Caco-2 (cell line): ENCODE measurements at regions of chr11 and their contacts with region 1.

Region 1: GRCh38 chr11:66222358-66223149 is 45.9 kb upstream of the RAB1B start:
- DNase-seq: peak; percentile 90 to 92
- H3K4me3 ChIP-seq: no peak overlapping the region
- H3K4me3 Mint-ChIP-seq: no peak overlapping the region
- H3K27ac Mint-ChIP-seq: peak overlapping the region; percentile 47
- H3K4me1 ChIP-seq: peaks cover 9% of the 10 kb centered on the region; the same call in 1 of the 2 replicates
- H3K4me1 Mint-ChIP-seq: peaks cover 18% of the 10 kb centered on the region
- H3K27me3 ChIP-seq: no peaks in the 10 kb centered on the region
- H3K27me3 Mint-ChIP-seq: no peaks in the 10 kb centered on the region
- CTCF ChIP-seq: peak; percentile 99 to 100

Region 2: DNA sequence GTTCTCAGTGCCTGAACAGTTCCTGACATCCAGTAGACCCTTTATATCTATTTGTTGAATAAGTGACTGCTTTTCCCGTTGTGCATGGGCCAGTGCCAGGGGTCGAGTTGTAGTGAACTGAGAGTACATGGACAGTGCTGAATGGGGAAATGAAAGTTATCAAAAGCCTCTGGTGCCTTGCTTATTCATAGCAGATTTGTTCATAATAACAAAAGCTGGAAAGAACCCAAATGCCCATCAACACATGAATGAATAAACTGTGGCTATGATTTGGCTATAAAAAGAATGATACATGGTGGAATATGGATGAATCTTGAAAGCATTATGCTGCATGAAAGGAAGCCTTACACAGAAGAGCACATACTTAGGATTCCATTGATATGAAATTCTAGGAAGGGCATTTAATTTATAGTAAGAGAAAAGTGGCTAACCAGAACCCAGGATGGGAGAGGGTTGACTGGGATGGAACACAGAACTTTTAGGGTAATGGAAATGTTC is 109.9 kb before region 1 on chr11:
- CTCF ChIA-PET with region 1: interaction called, 14 read pairs
- POLR2A ChIA-PET with region 1: no interaction called
- intact Hi-C with region 1: no loop called
- DNase-seq: no peak
- H3K4me3 ChIP-seq: no peak overlapping the region
- H3K4me3 Mint-ChIP-seq: peak overlapping the region; percentile 39
- H3K27ac Mint-ChIP-seq: peak overlapping the region; percentile 89
- H3K4me1 ChIP-seq: peaks cover 71% of the 10 kb centered on the region
- H3K4me1 Mint-ChIP-seq: peaks cover 51% of the 10 kb centered on the region
- H3K27me3 ChIP-seq: no peaks in the 10 kb centered on the region
- H3K27me3 Mint-ChIP-seq: no peaks in the 10 kb centered on the region
- CTCF ChIP-seq: no peak

Region 3: DNA sequence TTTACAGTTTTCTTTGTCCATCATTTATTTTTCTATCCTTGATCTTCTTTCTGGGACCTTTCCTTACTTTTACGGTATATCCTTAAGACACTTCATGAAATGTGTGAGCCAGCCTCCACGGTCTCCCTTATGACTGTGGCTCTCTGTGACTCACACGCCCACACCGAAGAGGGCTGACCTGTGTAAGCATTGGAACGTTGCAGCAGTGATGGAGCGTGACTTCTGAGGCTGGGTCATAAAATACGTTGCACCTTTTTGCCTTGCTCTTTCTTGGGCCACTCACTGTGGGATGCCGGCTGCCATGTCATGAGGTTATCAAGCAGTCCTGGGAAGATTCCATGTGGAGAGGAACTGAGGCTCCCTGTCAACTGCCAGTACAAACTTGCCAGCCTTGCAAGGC is 50.4 kb before region 1 on chr11:
- CTCF ChIA-PET with region 1: no interaction called
- POLR2A ChIA-PET with region 1: no interaction called
- intact Hi-C with region 1: no loop called
- DNase-seq: no peak
- H3K4me3 ChIP-seq: no peak overlapping the region
- H3K4me3 Mint-ChIP-seq: no peak overlapping the region
- H3K27ac Mint-ChIP-seq: no peak overlapping the region
- H3K4me1 ChIP-seq: peaks cover 8% of the 10 kb centered on the region; the same call in 1 of the 2 replicates
- H3K4me1 Mint-ChIP-seq: peaks cover 26% of the 10 kb centered on the region
- H3K27me3 ChIP-seq: no peaks in the 10 kb centered on the region
- H3K27me3 Mint-ChIP-seq: no peaks in the 10 kb centered on the region
- CTCF ChIP-seq: no peak

Region 4: GRCh38 chr11:66183494-66184048 is 39.0 kb before region 1 on chr11:
- CTCF ChIA-PET with region 1: interaction called, 5 read pairs
- POLR2A ChIA-PET with region 1: interaction called, 14 read pairs
- intact Hi-C with region 1: no loop called
- DNase-seq: peak in 1 of 2 experiments; percentile 24
- H3K4me3 ChIP-seq: no peak overlapping the region
- H3K4me3 Mint-ChIP-seq: no peak overlapping the region
- H3K27ac Mint-ChIP-seq: no peak overlapping the region
- H3K4me1 ChIP-seq: peaks cover 8% of the 10 kb centered on the region; the same call in 1 of the 2 replicates
- H3K4me1 Mint-ChIP-seq: peaks cover 7% of the 10 kb centered on the region
- H3K27me3 ChIP-seq: no peaks in the 10 kb centered on the region
- H3K27me3 Mint-ChIP-seq: no peaks in the 10 kb centered on the region
- CTCF ChIP-seq: no peak

Region 5: DNA sequence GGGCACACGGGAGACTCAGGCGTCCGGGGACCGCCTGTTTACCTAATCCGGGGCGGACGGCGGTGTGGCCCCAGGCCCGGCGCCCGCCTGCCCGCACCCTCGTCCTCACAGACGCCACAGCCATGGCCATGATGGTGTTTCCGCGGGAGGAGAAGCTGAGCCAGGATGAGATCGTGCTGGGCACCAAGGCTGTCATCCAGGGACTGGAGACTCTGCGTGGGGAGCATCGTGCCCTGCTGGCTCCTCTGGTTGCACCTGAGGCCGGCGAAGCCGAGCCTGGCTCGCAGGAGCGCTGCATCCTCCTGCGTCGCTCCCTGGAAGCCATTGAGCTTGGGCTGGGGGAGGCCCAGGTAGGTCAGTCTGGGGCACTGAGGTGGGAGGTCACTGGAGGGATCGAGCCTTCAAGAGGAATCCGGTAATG is 35.9 kb after region 1 on chr11:
- CTCF ChIA-PET with region 1: interaction called, 3 read pairs
- POLR2A ChIA-PET with region 1: no interaction called
- intact Hi-C with region 1: loop called (anchors 1 kb)
- DNase-seq: no peak
- H3K4me3 ChIP-seq: peak overlapping the region; percentile 81
- H3K4me3 Mint-ChIP-seq: peak overlapping the region; percentile 93
- H3K27ac Mint-ChIP-seq: peak overlapping the region; percentile 90
- H3K4me1 ChIP-seq: no peaks in the 10 kb centered on the region
- H3K4me1 Mint-ChIP-seq: peaks cover 18% of the 10 kb centered on the region
- H3K27me3 ChIP-seq: no peaks in the 10 kb centered on the region
- H3K27me3 Mint-ChIP-seq: no peaks in the 10 kb centered on the region
- CTCF ChIP-seq: no peak

Region 6: DNA sequence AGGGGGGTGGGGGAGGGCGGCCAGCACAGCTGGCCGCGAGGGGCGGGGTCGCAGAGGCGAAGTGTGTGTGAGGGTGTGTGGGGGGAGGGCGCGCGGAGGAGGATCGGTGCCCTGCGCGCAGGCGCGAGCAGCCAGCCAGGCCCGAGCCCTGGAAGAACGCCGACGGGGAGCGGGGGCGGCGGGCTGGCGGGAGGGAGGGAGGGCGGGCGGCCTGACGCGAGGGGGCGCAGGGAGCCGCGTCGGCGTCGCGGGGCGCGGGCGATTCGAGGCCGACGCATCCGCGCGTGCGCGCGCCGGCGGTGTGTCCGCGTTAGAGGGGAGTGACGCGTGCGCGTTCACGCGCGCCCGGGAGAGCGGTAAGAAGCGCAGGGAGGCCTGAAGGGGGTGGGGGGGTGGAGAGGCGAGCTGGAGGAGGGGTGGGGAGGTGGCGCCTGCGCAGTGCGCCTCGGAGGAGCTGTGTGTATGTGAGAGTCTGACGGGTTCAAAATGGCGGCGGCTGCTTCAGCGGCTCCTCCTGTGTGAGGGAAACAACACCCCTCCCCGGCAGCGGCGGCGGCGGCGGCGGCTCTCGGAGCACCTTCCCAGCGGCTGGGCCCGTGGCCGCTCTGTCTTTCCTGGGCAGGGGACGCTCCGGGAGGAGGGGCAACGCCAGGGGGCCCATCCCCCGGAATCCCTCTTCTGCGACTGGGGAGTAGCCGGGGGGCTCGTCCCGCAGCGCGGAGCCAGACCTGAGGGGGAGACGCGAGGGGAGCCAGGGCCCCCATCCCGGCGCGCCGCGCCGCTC is 896.4 kb after region 1 on chr11 and contains the start of gene KDM2A:
- CTCF ChIA-PET with region 1: no interaction called
- POLR2A ChIA-PET with region 1: no interaction called
- intact Hi-C with region 1: no loop called
- DNase-seq: peak; percentile 99 to 100
- H3K4me3 ChIP-seq: peak within 1 kb of the TSS; percentile 92
- H3K4me3 Mint-ChIP-seq: peak within 1 kb of the TSS; percentile 99
- H3K27ac Mint-ChIP-seq: peak within 1 kb of the TSS; percentile 96
- H3K4me1 ChIP-seq: peaks cover 54% of the 10 kb centered on the region
- H3K4me1 Mint-ChIP-seq: peaks cover 22% of the 10 kb centered on the region
- H3K27me3 ChIP-seq: no peaks in the 10 kb centered on the region
- H3K27me3 Mint-ChIP-seq: no peaks in the 10 kb centered on the region
- CTCF ChIP-seq: peak in 1 of 2 experiments; percentile 47
- total RNA-seq, gene KDM2A: 122 and 134 TPM in 2 replicates